Activated naive CD4-positive, alpha-beta T cell treated with anti-CD3 and anti-CD28 coated beads for 36 hours (primary cell): ENCODE measurements at regions of chr2 and their contacts with region 1.

Region 1: GRCh38 chr2:60966507-60967405 is 50.8 kb upstream of the PEX13 start:
- DNase-seq: no peak
- H3K4me3 Mint-ChIP-seq: peak overlapping the region; percentile 11
- H3K27ac Mint-ChIP-seq: peak overlapping the region; percentile 62
- H3K4me1 Mint-ChIP-seq: peaks cover 62% of the 10 kb centered on the region
- H3K27me3 Mint-ChIP-seq: no peaks in the 10 kb centered on the region

Region 2: GRCh38 chr2:60832621-60833020 is 134.1 kb before region 1 on chr2:
- CTCF ChIA-PET with region 1: no interaction called
- intact Hi-C with region 1: loop called (anchors 1 kb)
- DNase-seq: no peak
- H3K4me3 Mint-ChIP-seq: no peak overlapping the region
- H3K27ac Mint-ChIP-seq: peak overlapping the region; percentile 15
- H3K4me1 Mint-ChIP-seq: peaks cover 42% of the 10 kb centered on the region
- H3K27me3 Mint-ChIP-seq: no peaks in the 10 kb centered on the region

Region 3: GRCh38 chr2:60899230-60899891 is 67.4 kb before region 1 on chr2:
- CTCF ChIA-PET with region 1: interaction called, 4 read pairs
- intact Hi-C with region 1: loop called (anchors 1 kb)
- DNase-seq: peak; percentile 77
- H3K4me3 Mint-ChIP-seq: peak overlapping the region; percentile 24
- H3K27ac Mint-ChIP-seq: peak overlapping the region; percentile 90
- H3K4me1 Mint-ChIP-seq: peaks cover 51% of the 10 kb centered on the region
- H3K27me3 Mint-ChIP-seq: no peaks in the 10 kb centered on the region

Region 4: DNA sequence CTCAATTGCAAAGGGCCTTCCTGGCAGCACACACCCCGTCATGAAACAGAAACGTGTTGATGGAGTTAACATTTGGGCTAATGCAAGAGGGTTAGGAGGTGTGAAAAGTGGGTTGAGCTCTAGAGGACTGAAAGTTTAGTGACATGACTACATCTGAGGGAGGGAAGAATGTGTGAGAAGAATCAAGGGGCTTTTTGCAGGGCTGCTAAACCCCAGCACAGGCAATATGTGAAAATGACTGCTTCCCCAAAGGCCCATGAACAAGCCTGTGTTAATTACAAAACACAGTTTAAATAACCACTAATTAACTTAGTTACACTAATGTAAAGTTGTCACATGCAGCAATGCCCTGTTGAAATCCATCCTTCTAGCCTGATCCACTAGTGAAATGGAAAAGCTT is 12.6 kb before region 1 on chr2:
- CTCF ChIA-PET with region 1: interaction called, 4 read pairs
- intact Hi-C with region 1: loop called (anchors 2 kb)
- DNase-seq: peak; percentile 43
- H3K4me3 Mint-ChIP-seq: no peak overlapping the region
- H3K27ac Mint-ChIP-seq: peak overlapping the region; percentile 54
- H3K4me1 Mint-ChIP-seq: peaks cover 15% of the 10 kb centered on the region
- H3K27me3 Mint-ChIP-seq: no peaks in the 10 kb centered on the region

Region 5: GRCh38 chr2:60992985-60993392 is 26.2 kb after region 1 on chr2:
- CTCF ChIA-PET with region 1: interaction called, 4 read pairs
- intact Hi-C with region 1: loop called (anchors 1 kb)
- DNase-seq: peak; percentile 32
- H3K4me3 Mint-ChIP-seq: no peak overlapping the region
- H3K27ac Mint-ChIP-seq: no peak overlapping the region
- H3K4me1 Mint-ChIP-seq: peaks cover 5% of the 10 kb centered on the region
- H3K27me3 Mint-ChIP-seq: no peaks in the 10 kb centered on the region

Region 6: DNA sequence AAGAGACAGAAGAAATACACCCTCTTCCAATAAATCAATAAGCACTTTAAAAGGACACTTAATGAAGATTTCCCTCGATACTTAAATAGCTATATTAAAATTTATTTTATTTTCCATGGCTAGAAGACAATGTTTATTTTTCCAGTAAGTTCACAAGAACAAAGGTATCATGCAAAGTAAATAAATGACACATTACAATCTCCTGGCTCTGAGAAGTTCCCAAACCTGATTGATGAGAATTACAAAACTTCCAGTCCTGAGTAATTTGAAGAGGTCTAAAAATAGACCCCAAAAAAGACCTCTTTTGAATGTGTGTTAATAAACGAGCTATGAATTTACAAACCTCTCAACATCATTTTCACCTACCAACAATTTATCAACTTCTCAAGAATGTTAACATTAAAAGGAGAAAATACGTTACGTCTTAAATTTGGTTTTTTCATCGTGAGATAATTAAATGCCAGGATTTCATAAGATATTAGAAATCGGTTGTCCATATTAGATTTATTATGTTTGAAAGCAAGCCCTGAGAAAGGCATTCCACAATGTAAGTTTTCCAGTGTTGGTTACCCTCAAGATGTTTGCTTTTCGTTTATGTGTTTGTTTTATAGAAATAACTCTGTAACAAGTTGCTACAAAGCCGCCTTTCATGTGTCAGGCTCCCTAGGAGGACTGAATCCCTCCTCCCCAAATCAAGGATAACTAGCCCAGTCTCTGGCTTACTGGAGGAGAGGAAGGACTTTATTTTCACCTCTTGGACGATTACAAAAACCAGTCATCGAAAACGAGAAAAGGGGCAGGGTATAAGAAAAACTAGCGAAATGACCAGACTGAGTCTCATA is 49.4 kb after region 1 on chr2:
- CTCF ChIA-PET with region 1: no interaction called
- intact Hi-C with region 1: no loop called
- DNase-seq: no peak
- H3K4me3 Mint-ChIP-seq: peak overlapping the region; percentile 98
- H3K27ac Mint-ChIP-seq: peak overlapping the region; percentile 95
- H3K4me1 Mint-ChIP-seq: peaks cover 43% of the 10 kb centered on the region
- H3K27me3 Mint-ChIP-seq: no peaks in the 10 kb centered on the region

Region 7: DNA sequence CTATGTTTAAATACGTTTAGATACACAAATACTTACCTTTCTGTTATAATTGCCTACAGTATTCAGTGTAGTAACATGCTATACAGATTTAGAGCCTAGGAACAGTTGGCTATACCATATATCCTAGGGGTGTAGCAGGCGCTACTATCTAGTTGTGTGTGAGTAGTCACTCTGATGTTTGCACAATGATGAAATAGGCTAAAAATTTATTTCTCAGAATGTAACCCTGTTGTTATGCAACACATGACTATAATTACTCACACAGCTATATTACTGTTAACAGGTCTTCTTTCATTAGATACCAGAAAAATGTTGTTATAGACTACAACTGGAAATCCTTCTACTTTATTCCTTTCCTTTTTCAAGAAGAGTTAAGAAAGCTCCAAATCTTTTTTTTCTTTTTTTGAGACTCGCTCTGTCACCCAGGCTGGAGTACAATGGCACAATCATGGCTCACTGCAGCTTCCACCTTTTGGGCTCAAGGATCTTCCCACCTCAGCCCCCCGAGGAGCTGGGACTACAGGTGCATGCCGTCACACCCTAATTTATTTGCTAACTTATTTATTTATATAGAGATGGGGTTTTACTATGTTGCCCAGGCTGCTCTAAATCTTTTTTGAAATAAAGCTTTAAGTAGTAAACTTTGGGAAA is 243.7 kb after region 1 on chr2:
- CTCF ChIA-PET with region 1: no interaction called
- intact Hi-C with region 1: no loop called
- DNase-seq: no peak
- H3K4me3 Mint-ChIP-seq: no peak overlapping the region
- H3K27ac Mint-ChIP-seq: peak overlapping the region; percentile 53
- H3K4me1 Mint-ChIP-seq: peaks cover 2% of the 10 kb centered on the region
- H3K27me3 Mint-ChIP-seq: no peaks in the 10 kb centered on the region